Heart right ventricle (tissue), 16 donors: ENCODE measurements at regions of chr6 and their contacts with region 1.

Region 1: DNA sequence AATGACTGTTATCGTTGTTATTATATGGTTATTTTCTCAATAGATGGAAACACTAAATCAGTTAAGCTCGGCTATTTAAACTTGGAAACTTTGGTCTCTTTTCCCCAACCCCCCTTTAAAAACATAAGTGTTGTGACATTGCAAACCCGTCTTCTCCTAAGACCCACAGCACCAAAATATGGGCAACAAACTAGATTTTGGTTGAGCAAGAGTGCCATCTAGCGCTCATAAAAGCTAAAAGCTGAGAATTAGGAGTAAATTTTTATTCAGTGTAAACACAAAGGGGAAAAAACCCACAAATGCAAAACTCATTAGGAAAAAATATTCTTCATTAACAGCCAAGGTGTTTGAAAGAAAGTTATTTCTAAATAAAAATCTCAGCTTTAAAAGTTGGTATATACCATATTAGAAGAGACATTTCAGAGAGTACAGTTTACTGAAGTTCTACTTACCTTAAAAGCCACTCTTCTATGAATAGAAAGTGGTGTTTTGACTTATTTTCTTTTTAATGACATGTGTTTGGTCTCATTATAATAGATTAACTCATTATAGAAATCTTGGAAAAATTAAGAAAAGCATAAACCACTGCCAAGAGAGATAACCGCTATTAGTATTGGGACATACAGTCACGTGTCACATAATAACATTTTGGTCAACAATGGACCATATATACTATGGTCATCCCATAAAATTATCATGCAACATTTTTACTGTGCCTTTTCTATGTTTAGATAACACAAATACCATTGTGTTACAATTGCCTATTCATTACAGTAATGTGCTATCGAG is 21.1 kb downstream of the SESN1 start:
- DNase-seq: peak in 1 of 2 donors; percentile 68
- ATAC-seq: peak in 7 of 8 donors; percentile 55 to 79 (median 70)
- H3K4me3 ChIP-seq: no peak overlapping the region
- H3K27ac ChIP-seq: peak overlapping the region in 1 of 10 donors; percentile 25
- H3K4me1 ChIP-seq: peaks cover 0 to 58% (median 44%) of the 10 kb centered on the region in 9 donors
- H3K27me3 ChIP-seq: no peaks in the 10 kb centered on the region
- CTCF ChIP-seq: peak; percentile 39 to 79 (median 68)

Region 2: GRCh38 chr6:108558372-108559096 is 515.0 kb before region 1 on chr6:
- intact Hi-C with region 1: loop called in 2 of 10 experiments (anchors 5 kb)
- DNase-seq: peak; percentile 98
- ATAC-seq: peak; percentile 71 to 85 (median 80)
- H3K4me3 ChIP-seq: peak overlapping the region; percentile 70 to 97 (median 93)
- H3K27ac ChIP-seq: peak overlapping the region; percentile 96 to 100 (median 99)
- H3K4me1 ChIP-seq: peaks cover 0 to 47% (median 32%) of the 10 kb centered on the region in 9 donors
- H3K27me3 ChIP-seq: no peaks in the 10 kb centered on the region
- CTCF ChIP-seq: no peak

Region 3: DNA sequence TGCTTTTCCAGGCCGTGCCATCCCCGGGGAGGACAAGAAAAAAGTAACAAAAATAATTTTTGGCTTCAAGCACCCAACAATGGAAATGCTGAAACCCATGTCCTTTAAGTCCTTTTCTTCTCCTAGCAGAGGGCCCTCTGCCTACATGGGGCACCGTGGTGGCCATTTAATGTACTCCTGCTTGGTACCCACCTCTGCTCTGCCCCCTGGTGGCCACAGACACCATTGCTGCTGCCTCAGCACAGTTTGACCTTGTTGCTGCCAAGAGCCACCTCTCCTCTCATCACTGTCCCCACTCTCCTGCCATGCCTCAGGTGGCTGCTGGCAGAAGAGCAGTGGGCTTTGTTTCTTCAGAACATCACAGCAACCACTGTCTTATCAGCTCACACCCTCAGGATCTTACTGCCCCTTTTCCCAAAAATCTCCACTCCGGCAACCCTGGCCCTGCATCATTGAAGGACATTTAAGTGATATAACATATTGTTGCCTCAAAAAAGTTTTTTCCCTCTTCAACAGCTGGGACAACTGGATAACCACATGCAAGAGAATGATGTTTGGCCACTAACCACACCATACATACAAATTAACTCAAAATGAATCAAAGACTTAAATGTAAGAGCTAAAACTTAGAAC is 238.2 kb before region 1 on chr6:
- intact Hi-C with region 1: loop called in 5 of 10 experiments (anchors 5 to 10 kb)
- DNase-seq: peak; percentile 88 to 89
- ATAC-seq: peak; percentile 89 to 96 (median 94)
- H3K4me3 ChIP-seq: no peak overlapping the region
- H3K27ac ChIP-seq: peak overlapping the region in 3 of 10 donors; percentile 8 to 39 (median 22)
- H3K4me1 ChIP-seq: peaks cover 0 to 32% (median 0%) of the 10 kb centered on the region in 9 donors
- H3K27me3 ChIP-seq: no peaks in the 10 kb centered on the region
- CTCF ChIP-seq: peak; percentile 85 to 97 (median 95)

Region 4: DNA sequence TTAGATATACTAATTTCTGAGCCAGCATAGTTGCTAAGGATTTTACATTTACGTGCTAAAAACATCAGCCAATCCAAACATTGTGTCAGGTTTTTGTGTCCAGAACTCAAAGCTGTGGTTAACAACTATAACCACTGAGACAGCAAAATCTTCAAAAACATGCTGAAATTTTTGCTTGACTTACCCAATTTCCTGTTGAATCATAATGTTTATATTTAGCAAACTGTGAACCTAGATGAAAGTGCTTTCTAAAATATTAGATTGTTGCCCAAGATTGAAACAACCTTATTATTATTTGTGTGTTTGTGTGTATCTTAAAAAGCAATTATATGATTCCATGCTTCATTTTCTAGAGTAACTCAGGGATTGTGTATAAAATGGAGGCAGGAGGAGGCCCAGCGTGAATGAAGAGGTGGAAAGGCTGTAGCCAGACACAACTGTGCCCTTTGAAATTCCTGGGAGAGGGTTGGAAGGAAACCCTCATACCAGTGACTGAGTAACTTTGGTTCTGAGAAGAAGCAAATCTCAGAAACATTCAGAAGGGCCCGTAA is 177.4 kb before region 1 on chr6:
- intact Hi-C with region 1: loop called in 7 of 10 experiments (anchors 2 to 10 kb)
- DNase-seq: no peak
- ATAC-seq: peak in 5 of 8 donors; percentile 22 to 51 (median 33)
- H3K4me3 ChIP-seq: no peak overlapping the region
- H3K27ac ChIP-seq: peak overlapping the region in 8 of 10 donors; percentile 14 to 82 (median 70)
- H3K4me1 ChIP-seq: peaks cover 0 to 44% (median 21%) of the 10 kb centered on the region in 9 donors
- H3K27me3 ChIP-seq: no peaks in the 10 kb centered on the region
- CTCF ChIP-seq: no peak

Region 5: GRCh38 chr6:108947114-108947854 is 126.3 kb before region 1 on chr6:
- intact Hi-C with region 1: loop called in 2 of 10 experiments (anchors 5 to 10 kb)
- DNase-seq: peak in 1 of 2 donors; percentile 60
- ATAC-seq: peak in 7 of 8 donors; percentile 41 to 63 (median 52)
- H3K4me3 ChIP-seq: no peak overlapping the region
- H3K27ac ChIP-seq: peak overlapping the region; percentile 84 to 98 (median 92)
- H3K4me1 ChIP-seq: peaks cover 31 to 85% (median 69%) of the 10 kb centered on the region in 9 donors
- H3K27me3 ChIP-seq: no peaks in the 10 kb centered on the region
- CTCF ChIP-seq: peak in 1 of 9 donors; percentile 5

Region 6: DNA sequence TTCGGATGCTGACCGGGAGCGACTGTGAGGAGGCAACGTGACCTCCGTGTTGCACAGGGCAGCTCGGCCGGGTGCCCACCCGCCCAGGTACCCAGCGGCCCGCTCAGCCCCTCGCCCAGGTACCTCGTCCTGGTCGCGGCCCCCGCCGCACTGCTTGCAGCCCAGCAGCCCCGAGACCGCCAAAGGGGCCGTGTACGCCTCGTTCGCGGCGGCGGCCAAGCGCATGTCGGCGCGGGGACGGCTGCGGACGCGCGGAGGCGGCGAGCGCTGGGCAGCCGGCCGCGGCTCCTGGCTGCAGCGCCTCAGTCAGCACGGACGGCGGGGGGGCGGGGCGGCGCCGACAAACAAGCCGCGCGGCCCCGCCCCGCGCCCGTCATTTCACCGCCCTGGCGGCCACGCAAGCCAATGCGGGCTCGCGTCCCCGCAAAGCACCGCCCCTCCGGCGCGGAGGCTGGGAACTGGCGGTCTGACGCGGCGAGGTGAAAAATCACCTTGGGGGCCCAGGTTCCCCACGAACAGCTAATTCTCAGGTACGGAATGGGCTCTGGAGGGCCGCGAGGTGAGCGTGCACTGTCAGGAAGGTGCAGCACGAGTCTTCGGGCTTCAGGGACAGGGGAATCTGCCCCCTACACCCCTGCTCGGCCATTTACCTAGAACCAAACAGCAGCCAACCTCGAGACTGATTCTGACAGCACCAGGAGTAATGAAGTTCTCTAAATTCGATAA is 64.1 kb before region 1 on chr6:
- intact Hi-C with region 1: loop called in 4 of 10 experiments (anchors 5 to 10 kb)
- DNase-seq: peak; percentile 93 to 96
- ATAC-seq: peak; percentile 93 to 98 (median 96)
- H3K4me3 ChIP-seq: peak overlapping the region; percentile 67 to 98 (median 94)
- H3K27ac ChIP-seq: peak overlapping the region; percentile 91 to 98 (median 96)
- H3K4me1 ChIP-seq: peaks cover 0 to 74% (median 59%) of the 10 kb centered on the region in 9 donors
- H3K27me3 ChIP-seq: no peaks in the 10 kb centered on the region
- CTCF ChIP-seq: peak in 7 of 9 donors; percentile 11 to 52 (median 15)

Region 7: DNA sequence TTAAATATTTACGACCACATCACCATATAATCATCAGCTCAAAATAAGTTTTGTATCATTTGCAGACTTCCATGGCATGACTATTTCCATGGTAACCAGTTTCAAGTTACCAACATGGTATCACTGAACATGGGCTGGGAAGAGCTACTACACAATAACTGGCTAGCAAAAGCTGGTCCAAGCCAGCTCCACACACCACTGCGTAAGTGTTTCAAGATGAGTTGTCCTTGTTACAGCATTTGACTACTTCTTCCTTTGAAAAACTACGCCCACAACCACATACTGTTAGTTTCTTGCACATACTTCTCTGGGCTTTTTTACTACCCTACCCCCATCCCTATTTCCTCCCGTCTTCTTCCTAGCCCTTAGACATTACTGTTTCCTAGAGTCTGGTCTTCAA is 300.2 kb after region 1 on chr6:
- intact Hi-C with region 1: no loop called
- DNase-seq: no peak
- ATAC-seq: peak in 3 of 8 donors; percentile 18 to 53 (median 37)
- H3K4me3 ChIP-seq: no peak overlapping the region
- H3K27ac ChIP-seq: peak overlapping the region in 1 of 10 donors; percentile 51
- H3K4me1 ChIP-seq: peaks cover 0 to 68% (median 36%) of the 10 kb centered on the region in 9 donors
- H3K27me3 ChIP-seq: no peaks in the 10 kb centered on the region
- CTCF ChIP-seq: no peak